ENCODE measurements at regions of chr2 and their contacts with region 1.

Region 1: GRCh38 chr2:237178396-237178795 is 92.7 kb downstream of the COPS8 start:
- H3K4me3 ChIP-seq: no peak overlapping the region
- H3K27ac ChIP-seq: no peak overlapping the region
- H3K4me1 ChIP-seq: no peaks in the 10 kb centered on the region
- CTCF ChIP-seq: no peak

Region 2: DNA sequence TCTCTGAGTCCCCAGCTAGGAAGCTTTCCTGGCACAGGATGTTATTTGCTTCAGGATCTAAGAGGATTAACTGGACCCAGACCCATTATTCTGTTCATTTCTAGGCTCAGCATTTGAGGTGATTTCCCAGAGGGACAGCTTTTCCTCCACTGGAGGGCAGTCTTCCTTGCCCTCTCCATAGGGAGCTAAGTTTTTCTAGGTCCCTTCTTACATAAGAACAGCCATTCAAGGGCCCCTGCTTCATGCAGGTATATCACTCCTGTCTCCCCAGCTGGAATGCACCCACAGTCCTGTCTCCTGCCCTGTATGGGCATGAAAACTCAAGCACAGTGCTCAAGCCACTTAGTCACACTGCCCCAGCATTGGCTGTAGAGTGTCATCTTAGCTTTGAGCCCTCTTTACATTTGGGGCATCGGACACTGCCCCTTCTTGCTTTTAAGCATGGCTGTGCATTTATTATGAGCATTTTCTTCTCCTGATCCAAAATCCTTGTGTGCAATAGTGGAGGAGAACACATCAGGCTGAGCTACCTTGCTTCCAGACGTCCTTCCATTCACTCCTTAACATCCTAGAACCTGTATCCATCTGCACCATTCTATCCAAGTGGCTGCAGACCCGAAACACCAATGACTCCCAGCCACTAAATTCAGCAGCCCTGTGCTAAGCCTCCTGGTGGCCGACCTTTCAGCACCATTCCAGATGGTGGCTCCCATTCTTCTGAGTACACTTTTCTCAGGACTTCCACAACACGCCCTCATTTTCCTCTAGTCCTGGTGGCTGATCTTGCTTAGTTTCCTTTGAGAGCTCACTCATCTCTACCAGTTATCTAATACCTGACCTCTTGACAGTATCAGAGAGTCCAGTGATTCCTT is 12.8 kb before region 1 on chr2:
- CTCF ChIA-PET with region 1: interaction called, 11 read pairs
- POLR2A ChIA-PET with region 1: no interaction called
- H3K4me3 ChIP-seq: no peak overlapping the region
- H3K27ac ChIP-seq: no peak overlapping the region
- H3K4me1 ChIP-seq: no peaks in the 10 kb centered on the region
- CTCF ChIP-seq: no peak

Region 3: GRCh38 chr2:237540823-237541222 is 362.4 kb after region 1 on chr2:
- CTCF ChIA-PET with region 1: no interaction called
- POLR2A ChIA-PET with region 1: no interaction called
- H3K4me3 ChIP-seq: no peak overlapping the region
- H3K27ac ChIP-seq: no peak overlapping the region
- H3K4me1 ChIP-seq: no peaks in the 10 kb centered on the region
- CTCF ChIP-seq: no peak